Heart right ventricle (tissue), 16 donors: ENCODE measurements at regions of chr3 and their contacts with region 1.

Region 1: GRCh38 chr3:101809178-101810021 is 30.4 kb downstream of the NXPE3 start:
- DNase-seq: no peak
- ATAC-seq: peak in 4 of 8 donors; percentile 41 to 64 (median 57)
- H3K4me3 ChIP-seq: no peak overlapping the region
- H3K27ac ChIP-seq: peak overlapping the region in 2 of 10 donors; percentile 18 to 41
- H3K4me1 ChIP-seq: peaks cover 0 to 28% (median 18%) of the 10 kb centered on the region in 9 donors
- H3K27me3 ChIP-seq: no peaks in the 10 kb centered on the region
- CTCF ChIP-seq: peak; percentile 32 to 81 (median 70)

Region 2: GRCh38 chr3:100756441-100756840 is 1053.0 kb before region 1 on chr3:
- intact Hi-C with region 1: no loop called
- DNase-seq: peak in 1 of 2 donors; percentile 20
- ATAC-seq: peak in 3 of 8 donors; percentile 32 to 59 (median 53)
- H3K4me3 ChIP-seq: no peak overlapping the region
- H3K27ac ChIP-seq: peak overlapping the region in 4 of 10 donors; percentile 9 to 59 (median 18)
- H3K4me1 ChIP-seq: peaks cover 0 to 51% (median 15%) of the 10 kb centered on the region in 9 donors
- H3K27me3 ChIP-seq: no peaks in the 10 kb centered on the region
- CTCF ChIP-seq: no peak

Region 3: DNA sequence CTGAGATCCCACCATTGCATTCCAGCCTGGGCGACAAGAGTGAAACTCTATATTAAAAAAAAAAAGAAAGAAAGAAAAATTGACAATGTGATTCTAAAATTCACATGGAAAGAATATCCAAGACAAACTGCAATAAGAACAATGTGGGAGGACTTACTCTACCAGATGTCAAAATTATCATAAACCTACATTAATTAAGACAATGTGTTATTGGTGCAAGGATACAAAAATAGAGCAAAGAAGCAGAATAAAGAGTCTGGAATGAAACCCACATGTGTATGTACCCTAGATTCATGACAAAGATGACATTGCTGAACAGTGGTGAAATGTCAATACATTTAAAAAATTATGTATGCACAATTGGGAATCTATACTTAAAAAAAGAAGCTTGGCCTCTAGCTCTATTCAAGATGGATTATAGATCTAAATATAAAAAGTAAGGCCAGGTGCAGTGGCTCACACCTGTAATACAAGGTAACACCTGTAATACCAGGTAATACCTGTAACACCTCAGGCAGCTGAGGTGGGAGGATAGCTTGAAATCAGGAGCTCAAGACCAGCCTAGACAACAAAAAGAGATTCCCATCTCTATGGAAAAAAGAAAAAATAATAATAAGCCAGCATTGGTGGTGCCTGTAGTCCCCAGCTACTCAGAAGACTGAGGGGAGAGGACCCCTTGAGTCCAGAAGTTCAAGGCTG is 178.2 kb before region 1 on chr3:
- intact Hi-C with region 1: no loop called
- DNase-seq: no peak
- ATAC-seq: no peak
- H3K4me3 ChIP-seq: no peak overlapping the region
- H3K27ac ChIP-seq: no peak overlapping the region
- H3K4me1 ChIP-seq: peaks cover 0 to 7% (median 0%) of the 10 kb centered on the region in 9 donors
- H3K27me3 ChIP-seq: no peaks in the 10 kb centered on the region
- CTCF ChIP-seq: no peak

Region 4: DNA sequence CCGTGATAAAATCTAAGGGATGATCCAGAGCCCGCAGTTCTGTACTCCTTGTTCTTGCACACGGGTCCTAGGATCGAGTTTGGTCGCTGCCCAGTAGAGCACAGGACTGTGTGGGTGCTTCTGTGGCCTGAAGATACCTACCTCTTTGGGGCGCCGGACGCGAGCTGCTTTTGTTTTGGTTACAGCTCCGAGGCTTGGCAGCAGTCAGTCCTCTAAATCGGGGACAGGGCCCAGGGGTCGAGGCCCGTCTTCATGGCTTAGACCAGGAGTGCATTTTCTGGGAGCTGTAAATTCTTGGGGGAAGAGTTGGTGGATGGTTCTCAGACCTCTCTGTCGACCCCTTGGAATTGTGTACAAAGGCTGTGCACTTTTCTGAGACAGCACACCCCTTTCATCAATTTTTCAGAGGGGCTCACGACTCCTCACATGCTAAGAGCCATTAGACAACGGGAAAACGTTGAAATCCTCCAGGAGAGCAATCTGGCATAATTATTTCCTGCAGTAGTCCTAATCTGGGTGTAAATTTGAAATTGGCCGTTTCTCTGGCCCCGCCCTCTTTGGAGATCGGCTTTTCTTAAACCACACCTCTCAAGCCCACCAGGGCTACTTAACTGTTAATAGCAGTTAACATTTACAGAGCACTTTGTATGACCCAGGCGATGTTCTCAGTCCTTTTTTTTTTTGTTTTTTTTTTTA is 84.1 kb before region 1 on chr3:
- intact Hi-C with region 1: no loop called
- DNase-seq: peak; percentile 22 to 27
- ATAC-seq: peak; percentile 11 to 72 (median 34)
- H3K4me3 ChIP-seq: peak overlapping the region; percentile 43 to 89 (median 74)
- H3K27ac ChIP-seq: peak overlapping the region in 9 of 10 donors; percentile 46 to 85 (median 82)
- H3K4me1 ChIP-seq: peaks cover 0 to 37% (median 13%) of the 10 kb centered on the region in 9 donors
- H3K27me3 ChIP-seq: no peaks in the 10 kb centered on the region
- CTCF ChIP-seq: no peak

Region 5: GRCh38 chr3:101849051-101849720 is 39.8 kb after region 1 on chr3 and contains the start of gene NFKBIZ:
- intact Hi-C with region 1: loop called in 5 of 10 experiments (anchors 5 kb)
- DNase-seq: peak; percentile 97 to 98
- ATAC-seq: peak; percentile 95 to 99 (median 96)
- H3K4me3 ChIP-seq: peak within 1 kb of the TSS; percentile 58 to 97 (median 90)
- H3K27ac ChIP-seq: peak within 1 kb of the TSS; percentile 97 to 100 (median 99)
- H3K4me1 ChIP-seq: peaks cover 0 to 49% (median 14%) of the 10 kb centered on the region in 9 donors
- H3K27me3 ChIP-seq: no peaks in the 10 kb centered on the region
- CTCF ChIP-seq: peak in 1 of 9 donors; percentile 9
- total RNA-seq, gene NFKBIZ: 7.7 to 26.2 (median 12.8) TPM

Region 6: DNA sequence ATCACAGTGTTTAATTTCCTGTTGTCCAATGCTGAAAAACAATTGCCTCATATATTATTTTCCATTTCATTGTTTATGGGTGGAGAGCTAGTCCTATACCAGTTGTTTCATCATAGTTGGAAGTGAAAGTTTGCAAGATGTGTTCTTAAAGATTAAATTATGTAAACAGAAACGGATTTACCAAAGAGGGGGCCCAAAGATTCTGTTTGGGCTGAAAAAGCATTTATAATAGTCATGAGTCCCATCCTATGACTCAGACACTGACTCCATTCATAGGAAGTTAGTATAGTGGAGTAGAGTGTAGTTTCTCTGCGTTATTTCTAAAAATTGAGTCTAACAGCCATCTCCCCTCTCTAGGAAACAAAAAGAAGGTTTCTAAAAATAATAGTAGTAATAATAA is 64.2 kb after region 1 on chr3:
- intact Hi-C with region 1: no loop called
- DNase-seq: no peak
- ATAC-seq: no peak
- H3K4me3 ChIP-seq: no peak overlapping the region
- H3K27ac ChIP-seq: no peak overlapping the region
- H3K4me1 ChIP-seq: peaks cover 0 to 7% (median 4%) of the 10 kb centered on the region in 9 donors
- H3K27me3 ChIP-seq: no peaks in the 10 kb centered on the region
- CTCF ChIP-seq: no peak

Region 7: DNA sequence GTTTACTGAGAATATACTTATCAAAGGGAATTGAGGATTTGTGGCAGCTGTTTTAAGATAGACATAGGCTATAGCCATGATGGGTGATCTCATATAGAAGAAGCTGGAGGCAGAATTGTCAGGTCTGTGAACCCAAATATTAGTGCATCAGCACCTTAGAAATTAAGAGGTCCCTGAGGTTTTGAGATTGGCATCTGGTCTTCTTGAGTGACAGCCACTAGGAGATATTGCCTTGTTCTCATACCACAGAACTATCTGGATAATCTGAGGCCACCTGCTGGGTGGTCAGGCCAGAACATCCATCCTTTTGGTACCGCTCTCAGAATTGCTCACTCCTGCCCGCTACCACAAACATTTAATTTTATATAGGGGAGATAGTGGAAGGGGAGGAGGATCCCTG is 414.7 kb after region 1 on chr3:
- intact Hi-C with region 1: loop called (anchors 1 to 5 kb)
- DNase-seq: no peak
- ATAC-seq: peak in 7 of 8 donors; percentile 56 to 80 (median 62)
- H3K4me3 ChIP-seq: no peak overlapping the region
- H3K27ac ChIP-seq: no peak overlapping the region
- H3K4me1 ChIP-seq: peaks cover 0 to 22% (median 0%) of the 10 kb centered on the region in 9 donors
- H3K27me3 ChIP-seq: peaks cover 0 to 3% (median 0%) of the 10 kb centered on the region in 7 donors
- CTCF ChIP-seq: peak in 6 of 9 donors; percentile 31 to 50 (median 43)

Region 8: GRCh38 chr3:102536456-102536855 is 727.1 kb after region 1 on chr3:
- intact Hi-C with region 1: loop called in 9 of 10 experiments (anchors 5 to 10 kb)
- DNase-seq: no peak
- ATAC-seq: peak in 1 of 8 donors; percentile 45
- H3K4me3 ChIP-seq: no peak overlapping the region
- H3K27ac ChIP-seq: no peak overlapping the region
- H3K4me1 ChIP-seq: no peaks in the 10 kb centered on the region
- H3K27me3 ChIP-seq: peaks cover 0 to 8% (median 0%) of the 10 kb centered on the region in 7 donors
- CTCF ChIP-seq: peak in 7 of 9 donors; percentile 33 to 59 (median 49)